ENCODE measurements at regions of chr17 and their contacts with region 1.

Region 1: GRCh38 chr17:48841395-48841831 is 10.6 kb downstream of the CALCOCO2 start:
- DNase-seq: peak in 5 of 9 experiments; percentile 16 to 81 (median 39)
- ATAC-seq: peak; percentile 90
- H3K4me3 ChIP-seq: peak overlapping the region; percentile 38 to 41
- H3K4me3 Mint-ChIP-seq: peak overlapping the region; percentile 79
- H3K27ac ChIP-seq: peak overlapping the region; percentile 53 to 82
- H3K27ac Mint-ChIP-seq: peak overlapping the region; percentile 95
- H3K4me1 ChIP-seq: peaks cover 45% of the 10 kb centered on the region
- H3K4me1 Mint-ChIP-seq: peaks cover 52% of the 10 kb centered on the region
- H3K27me3 ChIP-seq: no peaks in the 10 kb centered on the region
- H3K27me3 Mint-ChIP-seq: no peaks in the 10 kb centered on the region
- CTCF ChIP-seq: no peak

Region 2: DNA sequence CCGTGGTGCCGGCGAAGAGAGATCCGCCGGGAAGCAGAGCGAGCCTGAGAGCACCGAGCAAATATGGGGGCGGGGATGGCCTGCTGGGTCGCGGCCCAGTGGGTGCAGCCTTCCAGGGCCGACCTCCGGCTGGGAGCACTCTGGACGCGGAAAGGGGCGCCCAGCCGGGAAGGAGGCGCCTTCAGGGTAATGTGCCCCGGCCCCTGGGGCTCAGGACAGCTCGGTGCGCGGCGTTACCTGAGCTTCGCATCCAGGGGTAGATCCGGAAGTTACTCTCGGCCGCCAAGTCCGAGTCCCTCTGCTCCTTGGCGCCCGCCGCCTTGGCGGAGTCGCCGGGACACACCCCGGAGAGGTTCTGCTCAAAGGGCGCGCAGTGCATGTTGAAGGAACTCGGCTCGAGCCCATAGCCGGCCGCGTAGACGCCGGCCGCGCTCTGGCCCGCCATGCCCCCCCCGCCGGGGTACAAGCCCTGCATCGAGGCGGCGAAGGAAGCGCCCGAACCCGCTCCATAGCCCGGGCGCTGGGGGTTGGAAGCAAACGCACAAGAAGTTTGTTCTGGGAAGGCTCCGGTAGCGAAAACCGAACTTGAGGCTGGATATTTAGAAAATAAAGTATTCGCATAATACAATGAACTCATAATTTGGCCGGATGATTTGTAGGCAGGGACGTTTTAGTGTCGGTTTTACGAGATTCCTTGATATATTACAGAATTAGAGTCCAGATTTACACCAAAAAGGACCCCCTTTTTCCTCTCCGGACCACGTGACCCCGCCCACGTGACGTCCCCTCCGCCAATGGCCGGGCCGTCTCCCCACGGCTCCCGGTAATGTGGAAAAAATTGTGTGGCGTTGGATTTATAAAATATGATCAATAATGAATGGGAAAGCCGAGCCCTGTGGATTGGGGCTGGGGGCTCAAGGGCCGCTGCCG is 230.9 kb before region 1 on chr17 and contains the start of gene HOXB7:
- CTCF ChIA-PET with region 1: no interaction called
- POLR2A ChIA-PET with region 1: no interaction called
- intact Hi-C with region 1: no loop called
- DNase-seq: peak in 8 of 9 experiments; percentile 27 to 77 (median 66)
- ATAC-seq: peak; percentile 16
- H3K4me3 ChIP-seq: peak within 1 kb of the TSS; percentile 77 to 90
- H3K4me3 Mint-ChIP-seq: peak within 1 kb of the TSS; percentile 91
- H3K27ac ChIP-seq: no peak within 1 kb of the TSS
- H3K27ac Mint-ChIP-seq: no peak within 1 kb of the TSS
- H3K4me1 ChIP-seq: peaks cover 49% of the 10 kb centered on the region
- H3K4me1 Mint-ChIP-seq: peaks cover 39% of the 10 kb centered on the region
- H3K27me3 ChIP-seq: peaks cover 46 to 49% of the 10 kb centered on the region in 2 experiments
- H3K27me3 Mint-ChIP-seq: peaks cover 69% of the 10 kb centered on the region
- CTCF ChIP-seq: no peak
- total RNA-seq, gene HOXB7: 0.22 TPM in 1 of 2 experiments, not detected in the other

Region 3: GRCh38 chr17:48816774-48817590 is 24.4 kb before region 1 on chr17 and contains the start of gene TTLL6:
- CTCF ChIA-PET with region 1: interaction called, 11 read pairs
- POLR2A ChIA-PET with region 1: no interaction called
- intact Hi-C with region 1: no loop called
- DNase-seq: peak; percentile 47 to 89 (median 74)
- ATAC-seq: peak; percentile 99
- H3K4me3 ChIP-seq: peak within 1 kb of the TSS; percentile 39 to 66
- H3K4me3 Mint-ChIP-seq: peak within 1 kb of the TSS; percentile 81
- H3K27ac ChIP-seq: no peak within 1 kb of the TSS
- H3K27ac Mint-ChIP-seq: no peak within 1 kb of the TSS
- H3K4me1 ChIP-seq: peaks cover 11% of the 10 kb centered on the region
- H3K4me1 Mint-ChIP-seq: peaks cover 11% of the 10 kb centered on the region
- H3K27me3 ChIP-seq: peaks cover 17 to 20% of the 10 kb centered on the region in 2 experiments
- H3K27me3 Mint-ChIP-seq: peaks cover 40% of the 10 kb centered on the region
- CTCF ChIP-seq: no peak
- total RNA-seq, gene TTLL6: not detected

Region 4: GRCh38 chr17:48901241-48901640 is 59.8 kb after region 1 on chr17:
- CTCF ChIA-PET with region 1: no interaction called
- POLR2A ChIA-PET with region 1: no interaction called
- intact Hi-C with region 1: no loop called
- DNase-seq: no peak
- ATAC-seq: no peak
- H3K4me3 ChIP-seq: no peak overlapping the region
- H3K4me3 Mint-ChIP-seq: no peak overlapping the region
- H3K27ac ChIP-seq: no peak overlapping the region
- H3K27ac Mint-ChIP-seq: no peak overlapping the region
- H3K4me1 ChIP-seq: no peaks in the 10 kb centered on the region
- H3K4me1 Mint-ChIP-seq: no peaks in the 10 kb centered on the region
- H3K27me3 ChIP-seq: no peaks in the 10 kb centered on the region
- H3K27me3 Mint-ChIP-seq: no peaks in the 10 kb centered on the region
- CTCF ChIP-seq: no peak